Activated CD4-positive, alpha-beta memory T cell treated with anti-CD3 and anti-CD28 coated beads for 36 hours (primary cell): ENCODE measurements at regions of chr5 and their contacts with region 1.

Region 1: GRCh38 chr5:32329308-32329834 is 16.6 kb upstream of the MTMR12 start:
- DNase-seq: peak; percentile 74
- H3K4me3 Mint-ChIP-seq: no peak overlapping the region
- H3K27ac Mint-ChIP-seq: no peak overlapping the region
- H3K4me1 Mint-ChIP-seq: peaks cover 2% of the 10 kb centered on the region
- H3K27me3 Mint-ChIP-seq: no peaks in the 10 kb centered on the region

Region 2: GRCh38 chr5:32241034-32241783 is 88.2 kb before region 1 on chr5:
- CTCF ChIA-PET with region 1: interaction called, 271 read pairs
- POLR2A ChIA-PET with region 1: no interaction called
- intact Hi-C with region 1: no loop called
- DNase-seq: no peak
- H3K4me3 Mint-ChIP-seq: no peak overlapping the region
- H3K27ac Mint-ChIP-seq: no peak overlapping the region
- H3K4me1 Mint-ChIP-seq: no peaks in the 10 kb centered on the region
- H3K27me3 Mint-ChIP-seq: no peaks in the 10 kb centered on the region

Region 3: DNA sequence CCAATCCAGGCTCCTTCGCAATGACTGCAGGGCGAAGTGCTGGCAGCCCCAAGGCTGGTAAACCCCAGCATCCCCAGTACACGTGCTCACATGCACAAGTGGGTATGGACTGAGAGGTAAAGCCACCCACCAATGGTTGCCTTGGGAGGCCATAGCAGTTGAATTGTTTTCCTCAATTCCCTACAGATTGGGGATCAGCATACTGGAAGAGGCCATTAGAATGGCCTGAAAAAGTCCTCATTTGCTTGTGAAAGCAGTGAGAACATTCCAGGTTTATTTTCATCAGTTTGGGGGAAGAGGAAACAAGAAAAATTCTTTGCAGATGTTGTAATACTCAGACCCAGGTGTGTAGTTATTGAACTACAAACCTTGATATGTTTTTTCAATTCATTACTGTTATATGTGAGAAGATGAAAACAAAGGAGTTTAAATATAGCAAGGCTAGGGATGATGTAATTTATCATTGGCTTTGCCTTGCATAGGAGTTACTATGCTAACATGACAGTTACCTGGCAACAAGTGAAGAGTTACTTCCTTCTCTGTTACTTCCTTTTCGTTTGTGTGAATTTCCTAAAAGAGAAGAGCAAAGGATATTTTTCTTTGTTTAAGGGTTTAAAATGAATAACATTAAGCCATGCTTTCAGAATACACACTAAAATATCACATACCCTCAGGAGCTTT is 53.1 kb before region 1 on chr5:
- CTCF ChIA-PET with region 1: interaction called, 18 read pairs
- POLR2A ChIA-PET with region 1: no interaction called
- intact Hi-C with region 1: no loop called
- DNase-seq: no peak
- H3K4me3 Mint-ChIP-seq: no peak overlapping the region
- H3K27ac Mint-ChIP-seq: peak overlapping the region; percentile 28
- H3K4me1 Mint-ChIP-seq: peaks cover 46% of the 10 kb centered on the region
- H3K27me3 Mint-ChIP-seq: no peaks in the 10 kb centered on the region

Region 4: DNA sequence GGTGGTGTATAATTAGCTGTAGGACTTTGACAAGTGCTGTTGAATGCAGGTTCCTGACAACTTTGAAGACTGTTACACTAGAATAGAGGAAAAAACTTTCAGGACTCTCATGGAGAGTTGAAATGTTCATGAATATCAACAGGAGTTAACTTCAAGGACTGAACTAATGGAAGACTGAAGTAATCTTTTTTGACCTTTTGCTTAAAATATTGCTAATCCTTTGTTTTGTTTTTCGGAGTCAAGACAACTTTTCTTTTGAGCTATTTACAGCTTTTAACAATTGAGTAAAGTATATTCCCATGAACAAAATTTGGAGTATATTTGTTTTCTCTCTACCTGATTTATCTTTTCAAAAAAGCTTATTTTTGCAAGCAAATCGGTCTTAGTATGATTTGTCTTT is 17.5 kb after region 1 on chr5:
- CTCF ChIA-PET with region 1: interaction called, 19 read pairs
- POLR2A ChIA-PET with region 1: no interaction called
- intact Hi-C with region 1: no loop called
- DNase-seq: no peak
- H3K4me3 Mint-ChIP-seq: no peak overlapping the region
- H3K27ac Mint-ChIP-seq: no peak overlapping the region
- H3K4me1 Mint-ChIP-seq: peaks cover 3% of the 10 kb centered on the region
- H3K27me3 Mint-ChIP-seq: no peaks in the 10 kb centered on the region